SK-N-SH (cell line): ENCODE measurements at regions of chr7 and their contacts with region 1.

Region 1: GRCh38 chr7:94087664-94088352 is 83.7 kb upstream of the BET1 start:
- DNase-seq: peak; percentile 66
- H3K4me3 ChIP-seq: peak overlapping the region in 1 of 2 experiments; percentile 15; a peak in 1 of 4 replicates
- H3K27ac ChIP-seq: peak overlapping the region in 1 of 2 experiments; percentile 11; a peak in 2 of 4 replicates
- H3K4me1 ChIP-seq: peaks cover 9 to 11% of the 10 kb centered on the region in 2 experiments
- H3K27me3 ChIP-seq: no peaks in the 10 kb centered on the region
- CTCF ChIP-seq: peak; percentile 94
- EP300 ChIP-seq: peak; percentile 44 to 67; a peak in 2 of 4 replicates
- RAD21 ChIP-seq: peak; percentile 92

Region 2: DNA sequence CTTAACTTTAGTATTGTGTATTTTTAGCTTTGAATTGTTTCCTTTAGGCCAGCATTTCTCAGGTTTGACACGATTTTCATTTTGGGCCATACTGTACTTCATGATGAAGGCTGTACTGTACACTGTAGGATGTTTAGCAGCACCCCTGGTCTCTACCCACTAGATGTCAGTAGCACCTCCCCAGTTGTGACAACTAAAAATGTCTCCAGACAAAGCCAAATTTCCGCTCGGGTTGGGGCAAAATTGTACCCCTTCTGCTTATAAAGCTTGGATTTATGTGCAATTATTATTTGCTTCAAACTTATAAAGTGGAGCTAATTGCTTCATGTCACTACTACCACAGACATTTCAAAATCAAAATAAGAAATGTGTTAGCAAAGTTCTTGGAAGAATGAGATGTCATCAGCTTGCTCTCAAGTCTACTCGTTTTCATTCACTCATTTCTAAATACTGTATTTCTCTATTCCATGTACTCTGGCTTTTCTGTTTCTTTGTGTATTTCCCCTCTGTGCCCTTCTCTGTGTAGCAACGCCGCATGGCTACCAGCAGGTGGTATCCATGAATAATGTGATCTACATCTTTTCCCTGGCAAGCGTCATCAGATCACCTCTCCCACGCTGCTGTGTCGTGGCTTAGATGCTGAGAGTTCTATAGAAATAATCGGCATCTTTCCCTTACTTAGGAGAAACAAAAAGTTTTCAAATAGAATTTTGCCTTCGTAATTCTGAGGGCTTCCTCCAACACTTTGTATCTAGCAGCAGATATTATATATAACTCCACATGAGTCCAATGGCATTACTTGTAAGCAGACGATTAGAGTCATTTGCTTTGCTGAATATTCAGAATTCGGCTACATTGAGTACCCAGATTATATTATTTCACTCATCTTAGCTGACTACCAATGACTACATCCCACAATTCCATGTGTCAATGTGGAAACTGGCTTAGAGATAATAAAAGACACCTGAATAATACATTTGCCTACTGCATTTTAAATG is 465.5 kb before region 1 on chr7:
- CTCF ChIA-PET with region 1: interaction called, 49 read pairs
- POLR2A ChIA-PET with region 1: no interaction called
- DNase-seq: peak; percentile 32
- H3K4me3 ChIP-seq: no peak overlapping the region; a peak in 1 of 4 replicates
- H3K27ac ChIP-seq: no peak overlapping the region; a peak in 1 of 4 replicates
- H3K4me1 ChIP-seq: peaks cover 0 to 3% of the 10 kb centered on the region in 2 experiments; a peak in 2 of 4 replicates
- H3K27me3 ChIP-seq: no peaks in the 10 kb centered on the region
- CTCF ChIP-seq: peak; percentile 54
- EP300 ChIP-seq: no peak
- RAD21 ChIP-seq: peak; percentile 73

Region 3: GRCh38 chr7:93902777-93903423 is 184.9 kb before region 1 on chr7:
- CTCF ChIA-PET with region 1: interaction called, 31 read pairs
- POLR2A ChIA-PET with region 1: no interaction called
- DNase-seq: peak; percentile 55
- H3K4me3 ChIP-seq: no peak overlapping the region
- H3K27ac ChIP-seq: no peak overlapping the region
- H3K4me1 ChIP-seq: no peaks in the 10 kb centered on the region
- H3K27me3 ChIP-seq: no peaks in the 10 kb centered on the region
- CTCF ChIP-seq: peak; percentile 99
- EP300 ChIP-seq: no peak
- RAD21 ChIP-seq: peak; percentile 88

Region 4: DNA sequence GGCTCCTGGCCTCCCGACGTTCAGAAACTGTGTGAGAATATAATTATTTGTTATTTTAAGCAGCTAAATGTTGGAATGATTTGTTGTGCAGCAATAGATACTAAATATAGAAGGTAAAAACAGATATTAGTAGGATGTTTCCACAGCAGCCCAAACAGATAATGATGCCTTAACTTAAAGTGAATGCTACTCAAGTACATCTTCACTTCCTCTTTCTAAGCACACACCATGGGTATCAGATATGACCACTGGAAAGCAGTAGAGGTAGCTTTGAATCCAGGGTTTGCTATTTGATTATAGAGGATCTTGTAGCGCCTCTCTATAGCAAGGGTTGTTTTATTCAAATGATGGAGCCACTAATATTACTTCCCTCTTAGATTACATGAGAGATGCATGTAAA is 45.4 kb before region 1 on chr7:
- CTCF ChIA-PET with region 1: interaction called, 10 read pairs
- POLR2A ChIA-PET with region 1: no interaction called
- DNase-seq: no peak
- H3K4me3 ChIP-seq: no peak overlapping the region
- H3K27ac ChIP-seq: no peak overlapping the region
- H3K4me1 ChIP-seq: no peaks in the 10 kb centered on the region
- H3K27me3 ChIP-seq: peaks cover 6% of the 10 kb centered on the region; the same call in 1 of the 2 replicates
- CTCF ChIP-seq: no peak
- EP300 ChIP-seq: no peak
- RAD21 ChIP-seq: no peak

Region 5: DNA sequence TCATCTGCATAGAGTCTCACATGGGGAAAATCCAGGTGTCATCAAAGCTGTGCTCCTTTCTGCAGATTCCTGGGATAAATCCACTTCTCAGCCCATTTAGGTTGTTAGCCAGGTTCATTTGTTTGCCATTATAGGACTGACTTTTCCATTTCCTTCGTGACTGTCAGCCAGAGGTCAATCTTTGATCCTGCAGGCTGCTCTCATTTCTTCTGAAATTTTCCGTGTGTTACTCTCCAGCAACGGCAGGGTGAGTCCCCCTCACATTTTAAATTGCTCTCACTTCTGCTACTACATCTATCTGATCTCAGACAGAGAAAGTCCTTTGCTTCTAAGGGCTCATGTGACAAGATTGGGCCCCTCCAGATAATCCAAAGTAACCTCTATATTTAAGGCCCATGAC is 67.0 kb after region 1 on chr7:
- CTCF ChIA-PET with region 1: no interaction called
- POLR2A ChIA-PET with region 1: no interaction called
- DNase-seq: no peak
- H3K4me3 ChIP-seq: no peak overlapping the region
- H3K27ac ChIP-seq: no peak overlapping the region
- H3K4me1 ChIP-seq: no peaks in the 10 kb centered on the region; a peak in 1 of 4 replicates
- H3K27me3 ChIP-seq: no peaks in the 10 kb centered on the region
- CTCF ChIP-seq: no peak
- EP300 ChIP-seq: no peak
- RAD21 ChIP-seq: no peak

Region 6: GRCh38 chr7:94276795-94277194 is 189.0 kb after region 1 on chr7:
- CTCF ChIA-PET with region 1: interaction called, 12 read pairs
- POLR2A ChIA-PET with region 1: no interaction called
- DNase-seq: peak; percentile 37
- H3K4me3 ChIP-seq: no peak overlapping the region
- H3K27ac ChIP-seq: peak overlapping the region in 1 of 2 experiments; percentile 94; a peak in 3 of 4 replicates
- H3K4me1 ChIP-seq: peaks cover 0 to 16% of the 10 kb centered on the region in 2 experiments; a peak in 2 of 4 replicates
- H3K27me3 ChIP-seq: no peaks in the 10 kb centered on the region
- CTCF ChIP-seq: peak; percentile 58
- EP300 ChIP-seq: peak in 1 of 2 experiments; percentile 54; a peak in 2 of 4 replicates
- RAD21 ChIP-seq: peak; percentile 92